ENCODE measurements at regions of chr16 and their contacts with region 1.

Region 1: DNA sequence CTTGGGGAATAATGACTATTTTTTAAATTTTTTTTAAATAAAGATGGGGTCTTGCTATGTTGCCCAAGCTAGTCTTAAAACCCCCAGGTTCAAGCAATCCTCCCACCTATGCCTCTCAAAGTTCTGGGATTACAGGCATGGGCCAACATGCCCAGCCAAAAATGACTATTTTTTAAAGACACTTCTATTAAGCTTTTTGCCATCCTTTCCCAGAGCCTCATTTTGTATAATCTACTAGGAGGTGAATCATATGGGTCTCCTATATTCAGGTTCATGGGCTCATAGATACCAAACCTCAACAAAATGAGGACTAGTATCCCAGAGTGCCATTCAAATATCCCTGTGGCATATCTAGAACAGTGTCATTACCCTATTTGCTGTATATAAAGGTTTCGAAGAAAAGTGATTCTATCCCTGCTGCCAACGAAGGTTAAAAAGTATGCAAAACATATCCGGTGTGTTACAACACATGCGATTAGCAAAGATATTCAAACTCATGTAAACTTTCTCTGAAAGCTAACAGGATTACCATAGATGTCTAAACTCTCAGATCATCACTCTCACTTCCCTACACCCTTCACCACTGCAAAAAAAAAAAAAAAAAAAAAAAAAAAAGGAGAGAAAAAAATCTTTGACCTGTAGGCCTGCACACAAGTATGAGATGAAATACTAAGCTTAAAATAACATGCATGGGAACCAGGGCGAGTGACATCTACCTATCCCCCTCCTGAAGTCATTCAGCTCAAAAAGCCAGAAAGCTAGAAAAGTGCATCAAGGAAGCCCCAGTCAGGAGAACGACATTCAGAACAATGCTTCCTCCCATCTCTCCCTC is 23.5 kb downstream of the XPO6 start:
- DNase-seq: no peak
- H3K4me3 Mint-ChIP-seq: peak overlapping the region; percentile 58
- H3K27ac Mint-ChIP-seq: peak overlapping the region; percentile 83
- H3K4me1 Mint-ChIP-seq: peaks cover 87% of the 10 kb centered on the region
- H3K27me3 Mint-ChIP-seq: no peaks in the 10 kb centered on the region

Region 2: DNA sequence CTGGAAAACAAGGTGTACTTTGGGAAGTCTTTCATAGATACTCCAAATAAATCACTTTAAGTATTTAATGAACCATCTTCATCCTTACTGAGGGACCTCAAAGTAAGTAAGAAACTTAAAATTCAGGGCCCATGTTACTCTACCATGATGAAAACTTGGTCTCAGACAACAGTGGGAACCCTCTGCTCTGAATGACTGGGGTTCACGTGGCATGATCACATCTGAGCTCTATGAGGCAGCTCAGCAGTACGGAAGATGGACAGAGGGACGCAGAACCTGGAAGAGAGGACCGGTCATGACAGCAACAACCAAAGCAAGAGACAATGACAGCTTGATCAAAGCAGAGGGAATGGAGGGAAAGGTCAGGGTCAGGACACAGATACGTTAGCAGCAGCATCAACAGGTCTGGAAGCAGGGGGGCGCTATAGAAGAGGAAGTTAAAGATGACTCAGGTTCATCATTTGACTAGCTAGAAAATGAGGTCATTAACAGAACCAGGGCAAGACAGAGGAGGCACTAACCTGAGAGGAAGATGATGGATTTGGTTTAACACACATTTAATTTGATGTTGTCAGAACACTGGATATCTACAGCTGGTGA is 13.9 kb after region 1 on chr16:
- CTCF ChIA-PET with region 1: interaction called, 6 read pairs
- POLR2A ChIA-PET with region 1: interaction called, 208 read pairs
- DNase-seq: peak; percentile 46
- H3K4me3 Mint-ChIP-seq: no peak overlapping the region
- H3K27ac Mint-ChIP-seq: peak overlapping the region; percentile 81
- H3K4me1 Mint-ChIP-seq: peaks cover 27% of the 10 kb centered on the region
- H3K27me3 Mint-ChIP-seq: no peaks in the 10 kb centered on the region

Measured in activated CD4-positive, alpha-beta memory T cell treated with anti-CD3 and anti-CD28 coated beads, Interleukin-2, amount 10 ng/mL, durations not matched to agents 7 days and 5 days (primary cell).